CD4-positive, alpha-beta T cell (primary cell): ENCODE measurements at regions of chr3 and their contacts with region 1.

Region 1: GRCh38 chr3:27484015-27484844 is at the start of gene SLC4A7:
- DNase-seq: peak; percentile 95 to 99 (median 98)
- ATAC-seq: peak; percentile 83
- H3K4me3 ChIP-seq: peak within 1 kb of the TSS; percentile 96
- H3K4me3 Mint-ChIP-seq: peak within 1 kb of the TSS; percentile 99
- H3K27ac ChIP-seq: peak within 1 kb of the TSS; percentile 67 to 72
- H3K27ac Mint-ChIP-seq: peak within 1 kb of the TSS; percentile 97
- H3K4me1 ChIP-seq: peaks cover 29% of the 10 kb centered on the region
- H3K4me1 Mint-ChIP-seq: peaks cover 41% of the 10 kb centered on the region
- H3K27me3 ChIP-seq: no peaks in the 10 kb centered on the region
- H3K27me3 Mint-ChIP-seq: no peaks in the 10 kb centered on the region
- CTCF ChIP-seq: no peak
- total RNA-seq, gene SLC4A7: 37.0 to 38.3 TPM

Region 2: GRCh38 chr3:25789596-25790556 is 1694.4 kb before region 1 on chr3 and contains the start of gene OXSM:
- CTCF ChIA-PET with region 1: no interaction called
- POLR2A ChIA-PET with region 1: no interaction called
- intact Hi-C with region 1: loop called in 1 of 2 experiments (anchors 10 kb)
- DNase-seq: peak; percentile 78 to 98 (median 86)
- ATAC-seq: peak; percentile 92
- H3K4me3 ChIP-seq: peak within 1 kb of the TSS; percentile 75
- H3K4me3 Mint-ChIP-seq: peak within 1 kb of the TSS; percentile 98
- H3K27ac ChIP-seq: peak within 1 kb of the TSS; percentile 83 to 91
- H3K27ac Mint-ChIP-seq: peak within 1 kb of the TSS; percentile 94
- H3K4me1 ChIP-seq: peaks cover 15% of the 10 kb centered on the region
- H3K4me1 Mint-ChIP-seq: peaks cover 56% of the 10 kb centered on the region
- H3K27me3 ChIP-seq: no peaks in the 10 kb centered on the region
- H3K27me3 Mint-ChIP-seq: no peaks in the 10 kb centered on the region
- CTCF ChIP-seq: no peak
- total RNA-seq, gene OXSM: 6.2 to 7.9 TPM

Region 3: GRCh38 chr3:27467545-27467944 is 16.7 kb before region 1 on chr3:
- CTCF ChIA-PET with region 1: interaction called, 5 read pairs
- POLR2A ChIA-PET with region 1: interaction called, 10 read pairs
- intact Hi-C with region 1: no loop called
- DNase-seq: peak in 3 of 14 experiments; percentile 65 to 66 (median 66)
- ATAC-seq: peak; percentile 92
- H3K4me3 ChIP-seq: no peak overlapping the region
- H3K4me3 Mint-ChIP-seq: no peak overlapping the region
- H3K27ac ChIP-seq: no peak overlapping the region
- H3K27ac Mint-ChIP-seq: peak overlapping the region; percentile 31
- H3K4me1 ChIP-seq: no peaks in the 10 kb centered on the region
- H3K4me1 Mint-ChIP-seq: peaks cover 32% of the 10 kb centered on the region
- H3K27me3 ChIP-seq: no peaks in the 10 kb centered on the region
- H3K27me3 Mint-ChIP-seq: no peaks in the 10 kb centered on the region
- CTCF ChIP-seq: peak; percentile 63

Region 4: DNA sequence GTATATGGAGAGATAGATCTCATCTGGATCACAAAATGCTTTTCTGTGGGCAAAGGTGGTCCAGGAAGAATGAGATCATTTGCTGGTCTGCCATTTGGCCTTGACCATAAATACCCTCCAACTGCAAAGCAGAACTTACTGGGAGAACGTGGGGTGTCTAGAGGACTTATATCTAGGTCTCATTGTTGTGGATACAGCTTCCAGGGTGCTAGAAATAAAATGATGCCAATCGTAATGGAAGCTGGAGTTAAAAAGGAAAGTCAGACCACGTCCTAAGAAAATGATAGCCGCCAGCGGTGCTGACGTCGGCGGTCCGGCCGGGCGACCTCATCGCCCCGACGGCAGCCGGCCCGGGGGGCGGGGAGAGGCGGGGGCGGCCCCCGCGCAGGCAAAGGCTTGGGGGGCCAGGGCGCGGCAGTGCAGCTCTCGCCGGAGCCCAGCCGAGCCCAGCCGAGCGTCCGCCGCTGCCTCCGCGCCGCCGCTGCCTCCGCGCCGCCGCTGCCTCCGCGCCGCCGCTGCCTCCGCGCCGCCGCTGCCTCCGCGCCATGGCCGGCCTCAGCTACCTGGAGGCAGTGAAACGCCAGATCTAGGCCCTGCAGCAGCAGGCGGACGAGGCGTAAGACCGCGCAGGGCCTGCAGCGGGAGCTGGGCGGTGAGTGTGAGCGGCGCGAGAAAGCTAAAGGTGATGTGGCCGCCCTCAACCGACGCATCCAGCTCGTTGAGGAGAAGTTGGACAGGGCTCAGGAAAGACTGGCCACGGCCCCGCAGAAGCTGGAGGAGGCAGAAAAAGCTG is 148.4 kb after region 1 on chr3:
- CTCF ChIA-PET with region 1: no interaction called
- POLR2A ChIA-PET with region 1: interaction called, 4 read pairs
- intact Hi-C with region 1: loop called in 1 of 2 experiments (anchors 10 kb)
- DNase-seq: peak; percentile 9 to 77 (median 40)
- ATAC-seq: peak; percentile 77
- H3K4me3 ChIP-seq: peak overlapping the region; percentile 72
- H3K4me3 Mint-ChIP-seq: peak overlapping the region; percentile 90
- H3K27ac ChIP-seq: peak overlapping the region in 1 of 2 donors; percentile 42
- H3K27ac Mint-ChIP-seq: peak overlapping the region; percentile 78
- H3K4me1 ChIP-seq: peaks cover 15% of the 10 kb centered on the region
- H3K4me1 Mint-ChIP-seq: peaks cover 33% of the 10 kb centered on the region
- H3K27me3 ChIP-seq: no peaks in the 10 kb centered on the region
- H3K27me3 Mint-ChIP-seq: no peaks in the 10 kb centered on the region
- CTCF ChIP-seq: no peak

Region 5: DNA sequence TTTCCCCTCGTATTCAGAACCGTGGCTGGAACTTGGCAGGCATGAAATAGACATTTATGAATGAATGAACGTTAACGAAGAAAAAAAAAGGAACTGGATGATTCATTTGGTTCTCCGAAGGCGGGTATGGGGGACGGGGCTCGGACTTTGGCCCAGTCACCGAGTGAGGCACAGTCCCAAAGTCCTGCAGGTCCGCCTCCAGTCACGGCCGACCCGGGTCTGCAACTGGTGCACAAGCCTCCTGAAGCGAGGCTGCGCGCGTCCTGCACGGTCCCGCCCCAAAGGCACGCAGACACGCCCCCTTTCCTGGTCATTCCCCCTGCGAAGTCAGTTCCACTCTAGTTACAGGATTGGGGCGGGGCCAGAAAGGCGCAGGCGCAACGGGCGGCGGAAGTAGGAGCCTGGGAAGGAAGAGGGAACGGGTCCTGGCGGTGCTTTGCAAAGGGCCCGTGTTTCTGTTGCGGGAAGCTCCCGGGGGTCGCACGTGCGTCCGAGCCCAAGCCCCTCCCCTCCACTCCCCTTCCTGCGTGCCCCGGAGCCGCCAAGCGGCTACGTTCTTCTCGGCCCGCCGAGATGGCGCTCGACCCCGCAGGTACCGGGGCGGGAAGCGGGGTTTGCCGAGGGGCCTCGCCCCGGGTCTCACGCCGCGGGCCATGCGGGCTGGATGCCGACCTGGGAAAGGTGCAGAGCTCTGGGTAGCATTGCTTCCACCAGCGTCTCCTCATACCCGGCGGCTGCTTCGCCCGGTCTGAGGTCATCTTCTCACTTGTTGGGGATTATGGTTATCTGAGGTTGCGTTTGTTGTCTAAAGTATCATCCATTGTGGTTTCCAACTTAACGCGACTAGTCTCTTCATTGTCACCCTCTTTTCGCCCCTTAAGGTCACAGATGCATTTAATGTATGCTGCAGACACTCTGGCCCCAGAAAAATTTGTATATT is 757.3 kb after region 1 on chr3 and contains the start of gene CMC1:
- CTCF ChIA-PET with region 1: no interaction called
- POLR2A ChIA-PET with region 1: no interaction called
- intact Hi-C with region 1: loop called in 1 of 2 experiments (anchors 10 kb)
- DNase-seq: peak; percentile 72 to 96 (median 88)
- ATAC-seq: peak; percentile 93
- H3K4me3 ChIP-seq: peak within 1 kb of the TSS; percentile 66
- H3K4me3 Mint-ChIP-seq: peak within 1 kb of the TSS; percentile 98
- H3K27ac ChIP-seq: peak within 1 kb of the TSS; percentile 27 to 69
- H3K27ac Mint-ChIP-seq: peak within 1 kb of the TSS; percentile 79
- H3K4me1 ChIP-seq: peaks cover 33% of the 10 kb centered on the region
- H3K4me1 Mint-ChIP-seq: peaks cover 49% of the 10 kb centered on the region
- H3K27me3 ChIP-seq: no peaks in the 10 kb centered on the region
- H3K27me3 Mint-ChIP-seq: no peaks in the 10 kb centered on the region
- CTCF ChIP-seq: no peak
- total RNA-seq, gene CMC1: 5.0 to 6.6 TPM